Psoas muscle (tissue), 8 donors: ENCODE measurements at regions of chr4 and their contacts with region 1.

Region 1: DNA sequence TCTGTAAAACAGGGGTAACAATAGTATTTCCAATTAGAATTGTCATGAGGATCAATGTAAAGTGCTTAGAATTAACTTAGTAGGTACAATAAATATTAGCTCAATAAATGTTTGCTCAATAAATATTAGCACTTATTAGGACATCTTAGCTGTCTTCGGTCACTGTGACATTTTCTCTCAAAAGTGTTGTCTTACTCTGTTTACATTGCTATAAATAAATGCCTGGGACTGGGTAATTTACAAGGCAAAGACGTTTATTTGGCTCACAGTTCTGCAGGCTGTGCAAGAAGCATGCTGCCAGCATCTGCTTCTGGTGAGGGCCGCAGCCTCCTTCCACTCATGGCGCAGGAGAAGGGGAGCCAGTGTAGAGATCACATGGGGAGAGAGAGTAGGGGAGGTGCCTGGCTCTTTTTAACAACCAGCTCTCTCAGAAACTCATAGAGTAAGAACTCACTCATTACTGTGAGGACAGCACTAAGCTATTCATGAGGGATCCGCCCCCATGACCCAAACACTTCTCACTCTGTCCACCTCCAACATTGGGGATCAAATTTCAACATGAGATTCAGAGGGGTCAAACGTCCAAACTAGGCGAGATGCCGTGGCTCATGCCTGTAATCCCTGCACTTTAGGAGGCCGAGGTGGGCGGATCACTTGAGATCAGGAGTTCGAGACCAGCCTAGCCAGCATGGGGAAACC is 43.5 kb upstream of the HERC6 start:
- DNase-seq: no peak
- ATAC-seq: peak in 3 of 4 donors; percentile 59 to 82 (median 77)
- H3K4me3 ChIP-seq: no peak overlapping the region
- H3K27ac ChIP-seq: peak overlapping the region; percentile 42
- H3K4me1 ChIP-seq: peaks cover 14% of the 10 kb centered on the region
- H3K27me3 ChIP-seq: no peaks in the 10 kb centered on the region
- CTCF ChIP-seq: no peak

Region 2: GRCh38 chr4:87601361-87601760 is 733.8 kb before region 1 on chr4:
- intact Hi-C with region 1: no loop called
- DNase-seq: no peak
- ATAC-seq: no peak
- H3K4me3 ChIP-seq: no peak overlapping the region
- H3K27ac ChIP-seq: no peak overlapping the region
- H3K4me1 ChIP-seq: no peaks in the 10 kb centered on the region
- H3K27me3 ChIP-seq: no peaks in the 10 kb centered on the region
- CTCF ChIP-seq: no peak

Region 3: GRCh38 chr4:87985097-87985886 is 349.8 kb before region 1 on chr4:
- intact Hi-C with region 1: no loop called
- DNase-seq: peak in 1 of 2 donors; percentile 48
- ATAC-seq: peak in 2 of 4 donors; percentile 62 to 74
- H3K4me3 ChIP-seq: no peak overlapping the region
- H3K27ac ChIP-seq: no peak overlapping the region
- H3K4me1 ChIP-seq: no peaks in the 10 kb centered on the region
- H3K27me3 ChIP-seq: no peaks in the 10 kb centered on the region
- CTCF ChIP-seq: peak; percentile 36

Region 4: DNA sequence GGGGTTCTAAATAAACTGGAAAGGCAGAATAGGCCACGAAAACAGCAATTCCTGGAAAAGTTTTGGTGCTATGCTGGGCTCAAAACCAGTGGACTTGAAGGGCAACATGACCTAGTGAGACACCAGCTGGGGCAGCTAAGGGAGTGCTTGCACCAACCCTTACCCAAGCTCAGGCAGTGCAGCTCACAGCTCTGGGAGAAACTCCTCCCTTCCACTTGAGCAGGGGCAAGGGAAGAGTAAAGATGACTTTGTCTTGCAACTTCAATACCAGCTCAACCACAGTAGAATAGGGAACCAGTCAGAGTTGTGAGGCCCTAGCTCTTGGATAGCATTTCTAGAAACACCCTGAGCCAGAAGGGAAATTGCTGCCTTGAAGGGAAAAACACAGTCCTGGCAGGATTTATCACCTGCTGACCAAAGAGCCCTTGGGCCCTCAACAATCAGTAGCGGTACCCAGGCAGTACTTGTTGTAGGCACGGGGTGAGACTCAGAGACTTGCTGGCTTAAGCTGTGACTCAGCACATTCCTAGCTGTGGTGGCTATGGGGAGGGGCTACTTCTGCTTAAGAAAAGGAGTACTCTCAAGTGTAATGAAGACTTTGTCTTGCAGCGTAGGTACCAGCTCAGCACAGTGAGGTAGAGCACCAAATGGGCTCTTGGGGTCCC is 157.0 kb before region 1 on chr4:
- intact Hi-C with region 1: no loop called
- DNase-seq: no peak
- ATAC-seq: no peak
- H3K4me3 ChIP-seq: no peak overlapping the region
- H3K27ac ChIP-seq: no peak overlapping the region
- H3K4me1 ChIP-seq: no peaks in the 10 kb centered on the region
- H3K27me3 ChIP-seq: no peaks in the 10 kb centered on the region
- CTCF ChIP-seq: no peak

Region 5: DNA sequence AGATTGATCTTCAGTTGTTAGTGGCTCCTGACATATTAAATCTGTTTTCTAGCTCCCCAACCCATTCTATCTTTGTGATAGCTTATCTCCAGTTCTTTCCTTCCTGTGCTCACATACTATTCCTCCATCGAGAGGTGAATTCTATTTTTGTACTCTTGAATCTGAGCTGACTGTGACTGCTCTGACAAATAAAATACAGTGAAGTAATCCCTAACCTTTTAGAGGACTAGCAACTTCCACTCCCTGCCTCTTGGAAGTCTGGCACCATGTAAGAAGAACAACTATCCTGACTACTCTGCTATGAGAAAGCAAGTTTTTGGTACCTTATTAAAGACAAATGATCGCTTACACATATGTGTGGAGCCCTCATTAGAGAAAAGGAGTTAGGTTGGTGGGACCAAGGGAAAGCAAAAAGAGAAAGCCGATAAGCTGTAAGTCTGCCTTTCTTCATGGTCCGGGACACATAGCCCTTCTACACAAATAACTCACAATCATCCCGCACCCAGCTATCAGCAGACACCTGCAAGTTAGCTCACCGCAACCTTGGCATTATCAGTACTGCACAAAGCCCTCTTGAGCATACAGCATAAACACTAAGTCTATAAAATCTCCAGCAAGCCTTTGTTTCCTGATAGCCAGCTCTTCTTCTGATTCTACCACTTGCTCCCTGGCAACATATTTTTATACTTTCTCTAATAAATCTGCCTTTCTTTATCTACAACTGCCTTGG is 37.2 kb before region 1 on chr4:
- intact Hi-C with region 1: loop called in 1 of 2 experiments (anchors 5 kb)
- DNase-seq: no peak
- ATAC-seq: peak; percentile 86 to 97 (median 94)
- H3K4me3 ChIP-seq: peak overlapping the region; percentile 28
- H3K27ac ChIP-seq: peak overlapping the region; percentile 80
- H3K4me1 ChIP-seq: peaks cover 34% of the 10 kb centered on the region
- H3K27me3 ChIP-seq: no peaks in the 10 kb centered on the region
- CTCF ChIP-seq: no peak